Transverse colon (tissue), 4 donors: ENCODE measurements at regions of chr3 and their contacts with region 1.

Region 1: DNA sequence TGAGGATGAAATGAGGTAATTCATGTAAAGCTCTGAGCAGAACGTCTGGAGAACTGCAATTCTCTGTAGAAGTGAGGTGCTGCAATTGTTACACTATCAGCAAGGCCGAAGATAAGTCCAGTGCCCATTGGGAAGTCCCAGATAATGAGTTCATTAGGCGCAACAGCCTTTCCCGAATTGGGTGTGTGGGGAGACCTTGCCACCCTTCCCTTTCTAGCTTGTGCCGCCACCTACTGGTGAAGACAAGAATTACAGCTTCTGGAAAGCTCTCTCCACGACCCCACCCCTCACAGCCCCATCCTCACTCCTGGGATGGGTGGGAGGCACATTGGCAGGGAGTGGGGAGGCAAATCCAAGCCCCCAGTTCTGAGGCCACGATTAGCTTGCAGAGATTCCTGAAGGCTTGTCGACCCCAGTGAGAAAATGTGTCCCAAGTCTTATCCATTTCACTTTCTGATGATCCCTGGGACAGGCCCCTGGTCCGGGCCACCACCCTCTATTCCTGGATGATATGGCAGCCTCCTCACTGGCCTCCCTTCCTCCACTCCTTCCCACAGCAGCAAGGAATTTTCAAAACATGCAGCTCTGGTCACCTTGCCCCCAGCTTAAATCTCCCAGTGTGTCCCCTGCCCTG is 36.4 kb downstream of the FAM3D start:
- DNase-seq: peak; percentile 78
- H3K4me3 ChIP-seq: no peak overlapping the region
- H3K27ac ChIP-seq: peak overlapping the region; percentile 63 to 81 (median 77)
- H3K4me1 ChIP-seq: peaks cover 15 to 34% (median 27%) of the 10 kb centered on the region in 4 donors
- H3K27me3 ChIP-seq: no peaks in the 10 kb centered on the region
- CTCF ChIP-seq: peak; percentile 93 to 96 (median 95)
- EP300 ChIP-seq: no peak
- POLR2A ChIP-seq: no peak

Region 2: DNA sequence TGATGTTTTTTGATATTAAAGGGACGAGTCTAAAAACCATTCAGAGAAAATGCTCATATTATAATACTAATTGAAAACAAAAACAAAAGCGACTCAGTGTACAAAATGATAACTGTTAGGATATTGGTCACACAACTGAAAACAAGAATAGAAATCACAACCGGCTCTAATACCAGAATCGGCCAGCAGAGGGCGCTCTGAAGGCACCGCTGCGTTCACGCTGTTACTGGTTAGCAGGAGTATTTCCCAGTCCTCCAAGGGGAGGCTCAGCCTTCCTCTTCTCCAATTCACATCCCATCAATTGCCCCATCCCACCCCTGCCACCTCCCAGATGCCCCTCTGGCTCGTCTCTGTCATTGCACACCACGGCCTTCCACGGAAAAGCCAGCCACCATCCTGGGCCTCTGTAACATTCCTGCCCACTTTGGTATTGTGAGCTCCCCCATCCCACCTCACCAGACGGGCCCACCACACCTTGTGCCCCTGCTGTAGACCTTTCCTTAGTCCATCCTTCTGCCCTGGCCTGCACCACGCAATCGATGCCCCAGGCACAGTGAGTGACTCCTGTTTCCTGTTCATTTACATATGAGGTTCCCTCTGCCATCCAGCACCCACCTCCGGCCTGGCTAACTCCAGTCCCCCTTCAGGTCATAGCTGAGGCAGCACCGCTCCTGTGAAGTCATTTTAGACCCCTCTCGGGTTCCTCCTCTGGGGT is 61.5 kb before region 1 on chr3:
- in situ Hi-C with region 1: loop called in 2 of 4 experiments (anchors 5 to 10 kb)
- intact Hi-C with region 1: loop called (anchors 1 kb)
- DNase-seq: peak; percentile 84
- H3K4me3 ChIP-seq: no peak overlapping the region
- H3K27ac ChIP-seq: no peak overlapping the region
- H3K4me1 ChIP-seq: peaks cover 0 to 9% (median under 1%) of the 10 kb centered on the region in 4 donors
- H3K27me3 ChIP-seq: no peaks in the 10 kb centered on the region
- CTCF ChIP-seq: peak; percentile 90 to 96 (median 93)
- EP300 ChIP-seq: no peak
- POLR2A ChIP-seq: no peak

Region 3: DNA sequence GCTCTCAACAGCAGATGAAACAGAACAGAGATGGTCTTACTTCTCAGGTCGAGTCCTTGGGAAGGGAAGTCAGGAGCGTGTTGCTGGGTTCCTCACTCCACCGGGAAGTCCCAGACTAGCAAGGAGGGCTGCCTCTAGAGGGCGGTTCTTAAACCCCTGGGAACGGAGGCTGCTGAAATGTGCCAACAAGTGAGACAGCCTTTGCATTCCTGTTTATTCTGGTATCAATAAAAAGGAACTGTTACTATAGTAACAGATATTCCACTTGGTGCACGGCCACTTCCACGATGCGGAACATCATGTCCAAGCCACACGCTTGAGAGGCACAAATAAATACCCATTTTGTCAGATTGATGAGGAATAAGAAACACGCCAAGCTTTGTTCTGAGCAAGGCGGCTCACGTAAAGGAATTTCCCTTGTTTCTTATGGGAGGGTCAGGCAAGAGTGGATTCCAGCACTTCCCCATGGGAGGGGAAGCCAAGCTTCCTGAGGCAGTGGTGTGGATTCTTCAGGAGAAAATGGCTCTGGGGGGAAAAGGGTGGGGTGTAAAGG is 52.8 kb before region 1 on chr3 and contains the start of gene FAM107A:
- in situ Hi-C with region 1: loop called in 2 of 4 experiments (anchors 5 to 10 kb)
- intact Hi-C with region 1: loop called (anchors 1 kb)
- DNase-seq: peak; percentile 39
- H3K4me3 ChIP-seq: peak within 1 kb of the TSS in 3 of 4 donors; percentile 7 to 42 (median 20)
- H3K27ac ChIP-seq: peak within 1 kb of the TSS; percentile 46 to 73 (median 66)
- H3K4me1 ChIP-seq: peaks cover 0 to 16% (median 5%) of the 10 kb centered on the region in 4 donors
- H3K27me3 ChIP-seq: no peaks in the 10 kb centered on the region
- CTCF ChIP-seq: peak in 3 of 5 experiments; percentile 10 to 16 (median 11)
- EP300 ChIP-seq: peak; percentile 94
- POLR2A ChIP-seq: peak; percentile 60
- total RNA-seq, gene FAM107A: 14.1 to 21.9 (median 16.0) TPM